GM10248 (cell line): ENCODE measurements at regions of chr2 and their contacts with region 1.

Region 1: GRCh38 chr2:69477627-69478026 is 40.4 kb upstream of the NFU1 start:
- DNase-seq: no peak
- CTCF ChIP-seq: no peak

Region 2: DNA sequence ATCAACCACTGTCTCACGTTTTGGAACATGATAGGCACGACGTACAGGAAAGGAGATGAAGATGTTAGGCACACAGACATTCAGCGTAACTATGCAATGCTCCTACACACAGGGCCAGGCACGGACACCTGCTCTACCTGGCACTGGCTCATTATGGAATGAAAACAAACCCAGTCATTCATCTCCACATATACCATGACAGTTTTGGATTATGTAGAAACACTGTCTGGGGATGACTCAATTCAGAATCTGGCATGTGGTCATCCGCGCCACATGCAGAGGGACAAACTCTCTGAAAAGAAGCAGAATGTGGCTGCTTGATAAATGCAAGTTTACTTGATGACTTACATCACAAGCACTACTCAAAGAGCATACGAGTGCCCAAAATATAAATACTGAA is 10.9 kb before region 1 on chr2:
- CTCF ChIA-PET with region 1: interaction called, 10 read pairs
- POLR2A ChIA-PET with region 1: no interaction called
- DNase-seq: no peak
- CTCF ChIP-seq: no peak

Region 3: DNA sequence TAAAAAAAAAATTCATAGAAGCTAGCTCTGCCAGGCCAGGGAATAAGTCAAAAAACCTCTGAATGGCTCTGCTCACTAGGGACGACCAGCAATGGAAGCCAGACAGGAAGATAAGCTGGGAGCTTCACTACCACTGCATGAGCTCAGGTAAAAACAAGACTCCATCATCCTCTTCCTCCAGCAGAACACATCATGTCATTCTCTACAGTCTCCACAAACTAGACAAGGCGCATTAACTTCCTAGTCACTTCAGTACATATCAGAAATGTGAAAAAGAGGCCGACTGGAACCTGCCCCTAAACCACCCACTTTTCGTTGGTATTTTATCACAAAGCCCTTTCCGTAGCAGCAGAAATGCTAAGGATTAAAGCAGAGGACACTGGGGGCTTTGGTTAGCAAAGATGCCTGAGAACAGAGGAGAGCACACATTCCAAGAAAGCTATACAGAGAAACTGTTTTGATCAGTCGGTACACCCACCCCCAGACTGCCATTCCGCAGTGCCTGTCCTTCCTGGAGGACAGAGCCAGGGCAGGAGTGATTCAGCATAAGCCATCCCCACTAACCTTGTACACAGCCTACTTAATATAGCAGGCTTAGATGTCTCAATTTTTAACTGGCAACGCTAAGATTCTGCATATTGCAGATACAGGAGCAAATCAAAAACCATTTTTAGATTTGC is 112.5 kb after region 1 on chr2:
- CTCF ChIA-PET with region 1: no interaction called
- POLR2A ChIA-PET with region 1: no interaction called
- DNase-seq: no peak
- CTCF ChIP-seq: no peak